ENCODE measurements at regions of chr17 and their contacts with region 1.

Region 1: DNA sequence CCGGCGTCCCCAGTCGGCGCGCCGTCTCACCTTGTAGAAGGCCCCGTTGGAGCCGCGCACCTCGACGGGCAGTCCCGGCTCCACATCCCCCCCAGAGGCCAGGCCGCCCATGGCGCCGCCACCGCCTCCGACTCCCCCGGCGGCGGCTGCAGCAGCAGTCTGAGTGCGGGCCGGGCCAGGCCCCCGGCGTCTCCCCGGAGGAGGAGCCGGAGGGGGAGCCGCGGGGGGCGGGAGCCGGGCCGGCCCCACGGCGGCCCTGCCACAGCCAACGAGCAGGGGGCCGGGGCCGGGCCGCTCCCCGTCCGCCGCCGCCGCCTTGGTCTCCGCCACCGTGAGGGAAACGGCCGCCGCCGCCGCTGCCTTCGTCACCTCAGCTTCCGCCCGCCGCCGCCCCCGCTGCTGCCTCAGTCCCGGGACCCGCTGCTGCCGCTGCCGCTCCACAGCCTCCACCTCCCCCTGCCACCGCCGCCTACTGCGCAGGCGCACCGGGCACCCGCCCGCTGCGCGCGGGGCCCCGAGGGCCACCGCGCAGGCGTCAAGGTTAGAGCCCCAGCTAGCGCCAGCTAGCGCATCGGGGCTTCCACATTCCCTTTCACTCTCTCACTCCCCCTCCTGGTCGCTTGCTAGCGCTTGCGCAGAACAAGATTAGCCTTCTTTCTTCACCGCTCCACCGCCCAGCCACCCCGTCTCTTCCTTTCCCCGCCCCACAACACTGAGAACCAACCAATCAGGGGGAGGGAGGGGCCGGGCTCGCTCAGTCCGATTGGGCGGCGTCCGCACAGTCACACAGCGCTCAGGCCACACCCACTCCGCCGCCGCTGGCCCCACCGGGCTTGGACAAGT is at the start of gene FXR2:
- DNase-seq: peak; percentile 96 to 100 (median 98)
- ATAC-seq: peak; percentile 87
- H3K4me3 ChIP-seq: peak within 1 kb of the TSS; percentile 78 to 86
- H3K4me3 Mint-ChIP-seq: peak within 1 kb of the TSS; percentile 89
- H3K27ac ChIP-seq: peak within 1 kb of the TSS; percentile 70 to 89
- H3K27ac Mint-ChIP-seq: peak within 1 kb of the TSS; percentile 96
- H3K4me1 ChIP-seq: peaks cover 30% of the 10 kb centered on the region
- H3K4me1 Mint-ChIP-seq: peaks cover 38% of the 10 kb centered on the region
- H3K27me3 ChIP-seq: no peaks in the 10 kb centered on the region
- H3K27me3 Mint-ChIP-seq: no peaks in the 10 kb centered on the region
- CTCF ChIP-seq: peak; percentile 39
- total RNA-seq, gene FXR2: 18.8 to 21.7 TPM

Region 2: GRCh38 chr17:7538891-7539290 is 75.8 kb before region 1 on chr17:
- CTCF ChIA-PET with region 1: no interaction called
- POLR2A ChIA-PET with region 1: no interaction called
- intact Hi-C with region 1: no loop called
- DNase-seq: no peak
- ATAC-seq: no peak
- H3K4me3 ChIP-seq: no peak overlapping the region
- H3K4me3 Mint-ChIP-seq: no peak overlapping the region
- H3K27ac ChIP-seq: no peak overlapping the region
- H3K27ac Mint-ChIP-seq: no peak overlapping the region
- H3K4me1 ChIP-seq: no peaks in the 10 kb centered on the region
- H3K4me1 Mint-ChIP-seq: no peaks in the 10 kb centered on the region
- H3K27me3 ChIP-seq: peaks cover 0 to 2% of the 10 kb centered on the region in 2 experiments
- H3K27me3 Mint-ChIP-seq: peaks cover 3% of the 10 kb centered on the region
- CTCF ChIP-seq: no peak

Region 3: GRCh38 chr17:7583253-7584109 is 31.2 kb before region 1 on chr17 and contains the start of gene MPDU1:
- CTCF ChIA-PET with region 1: interaction called, 12 read pairs
- POLR2A ChIA-PET with region 1: interaction called, 5 read pairs
- intact Hi-C with region 1: loop called (anchors 1 kb)
- DNase-seq: peak; percentile 85 to 98 (median 94)
- ATAC-seq: peak; percentile 83
- H3K4me3 ChIP-seq: peak within 1 kb of the TSS; percentile 90 to 93
- H3K4me3 Mint-ChIP-seq: peak within 1 kb of the TSS; percentile 100
- H3K27ac ChIP-seq: peak within 1 kb of the TSS; percentile 92 to 99
- H3K27ac Mint-ChIP-seq: peak within 1 kb of the TSS; percentile 100
- H3K4me1 ChIP-seq: peaks cover 40% of the 10 kb centered on the region
- H3K4me1 Mint-ChIP-seq: peaks cover 47% of the 10 kb centered on the region
- H3K27me3 ChIP-seq: no peaks in the 10 kb centered on the region
- H3K27me3 Mint-ChIP-seq: no peaks in the 10 kb centered on the region
- CTCF ChIP-seq: no peak
- total RNA-seq, gene MPDU1: 16.6 to 17.2 TPM

Region 4: GRCh38 chr17:7589204-7589868 is 25.3 kb before region 1 on chr17:
- CTCF ChIA-PET with region 1: interaction called, 12 read pairs
- POLR2A ChIA-PET with region 1: interaction called, 5 read pairs
- intact Hi-C with region 1: no loop called
- DNase-seq: peak; percentile 40 to 81 (median 68)
- ATAC-seq: peak; percentile 89
- H3K4me3 ChIP-seq: no peak overlapping the region
- H3K4me3 Mint-ChIP-seq: no peak overlapping the region
- H3K27ac ChIP-seq: no peak overlapping the region
- H3K27ac Mint-ChIP-seq: peak overlapping the region; percentile 41
- H3K4me1 ChIP-seq: peaks cover 14% of the 10 kb centered on the region
- H3K4me1 Mint-ChIP-seq: peaks cover 12% of the 10 kb centered on the region
- H3K27me3 ChIP-seq: no peaks in the 10 kb centered on the region
- H3K27me3 Mint-ChIP-seq: no peaks in the 10 kb centered on the region
- CTCF ChIP-seq: peak; percentile 61

Region 5: GRCh38 chr17:7627250-7628121 is 12.8 kb after region 1 on chr17 and contains the start of gene SAT2:
- CTCF ChIA-PET with region 1: interaction called, 5 read pairs
- POLR2A ChIA-PET with region 1: interaction called, 12 read pairs
- intact Hi-C with region 1: loop called (anchors 1 kb)
- DNase-seq: peak; percentile 76 to 94 (median 86)
- ATAC-seq: peak; percentile 95
- H3K4me3 ChIP-seq: peak within 1 kb of the TSS; percentile 78 to 85
- H3K4me3 Mint-ChIP-seq: peak within 1 kb of the TSS; percentile 93
- H3K27ac ChIP-seq: peak within 1 kb of the TSS; percentile 74 to 78
- H3K27ac Mint-ChIP-seq: peak within 1 kb of the TSS; percentile 94
- H3K4me1 ChIP-seq: peaks cover 7% of the 10 kb centered on the region
- H3K4me1 Mint-ChIP-seq: peaks cover 16% of the 10 kb centered on the region
- H3K27me3 ChIP-seq: no peaks in the 10 kb centered on the region
- H3K27me3 Mint-ChIP-seq: no peaks in the 10 kb centered on the region
- CTCF ChIP-seq: no peak
- total RNA-seq, gene SAT2: 68.8 to 71.4 TPM

Region 6: DNA sequence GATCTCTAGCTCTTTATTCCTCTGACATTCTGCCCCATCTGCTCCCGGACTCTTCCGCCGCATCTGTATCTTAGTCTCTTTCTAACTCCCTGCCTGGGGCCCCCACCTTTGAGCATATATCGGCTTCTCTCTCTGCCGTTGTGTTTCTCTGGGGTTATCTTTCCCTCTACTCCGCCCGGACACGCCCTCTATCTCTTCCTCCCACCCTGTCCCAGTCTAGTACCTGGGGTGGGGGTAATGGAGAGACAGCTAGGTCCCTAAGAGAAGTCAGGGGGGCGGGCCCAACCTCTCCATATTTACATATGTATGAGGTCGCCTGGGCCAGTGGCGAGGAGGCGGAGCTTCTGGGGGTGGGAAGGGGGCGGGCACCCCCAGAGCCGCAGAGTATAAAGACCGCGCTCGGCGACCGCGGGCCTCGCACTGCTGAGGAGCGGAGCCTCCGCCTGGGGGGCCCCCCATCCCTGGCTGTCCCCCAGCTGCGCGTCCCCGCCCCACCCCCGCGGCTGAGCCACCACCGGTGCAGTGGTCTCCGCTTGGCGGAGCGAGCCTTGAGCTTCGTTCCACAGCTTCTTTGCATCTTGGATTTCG is 36.0 kb after region 1 on chr17 and contains the start of gene ATP1B2:
- CTCF ChIA-PET with region 1: no interaction called
- POLR2A ChIA-PET with region 1: no interaction called
- intact Hi-C with region 1: loop called (anchors 2 kb)
- DNase-seq: peak; percentile 44 to 88 (median 83)
- ATAC-seq: peak; percentile 94
- H3K4me3 ChIP-seq: peak within 1 kb of the TSS; percentile 47 to 72
- H3K4me3 Mint-ChIP-seq: peak within 1 kb of the TSS; percentile 88
- H3K27ac ChIP-seq: no peak within 1 kb of the TSS
- H3K27ac Mint-ChIP-seq: no peak within 1 kb of the TSS
- H3K4me1 ChIP-seq: peaks cover 17% of the 10 kb centered on the region
- H3K4me1 Mint-ChIP-seq: peaks cover 18% of the 10 kb centered on the region
- H3K27me3 ChIP-seq: peaks cover 8 to 19% of the 10 kb centered on the region in 2 experiments
- H3K27me3 Mint-ChIP-seq: peaks cover 33% of the 10 kb centered on the region
- CTCF ChIP-seq: no peak
- total RNA-seq, gene ATP1B2: 0.22 TPM in 1 of 2 experiments, not detected in the other

Measured in CD8-positive, alpha-beta T cell (primary cell).